Caco-2 (cell line): ENCODE measurements at regions of chr7 and their contacts with region 1.

Region 1: DNA sequence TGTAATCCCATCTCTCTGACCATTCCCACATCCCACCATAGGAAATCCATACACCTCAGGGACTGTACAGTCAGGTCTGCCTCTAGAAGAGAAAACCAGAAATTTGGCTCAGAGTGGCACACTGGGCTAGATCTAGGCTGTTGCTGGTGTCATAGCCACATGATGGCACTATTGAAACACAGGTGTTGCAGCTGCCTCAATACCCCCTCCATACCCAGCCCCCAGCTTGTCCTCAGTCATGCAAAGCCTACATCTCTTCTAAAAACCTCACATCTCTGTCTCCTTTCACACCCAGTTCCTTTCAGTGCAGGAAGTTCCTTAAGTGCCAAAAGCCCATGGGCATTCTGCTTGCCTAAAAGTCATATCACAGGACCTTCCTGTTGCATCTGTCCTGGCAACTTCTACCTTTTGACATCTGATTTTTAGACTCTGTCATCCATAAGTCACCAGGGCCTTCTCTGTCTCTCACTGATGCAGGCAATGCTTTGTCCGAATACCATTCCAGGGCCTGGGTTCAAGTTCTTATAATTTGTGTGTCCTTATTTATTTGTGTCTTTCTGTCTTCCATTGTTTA is 27.0 kb upstream of the HIBADH start:
- DNase-seq: peak; percentile 42 to 43
- H3K4me3 ChIP-seq: no peak overlapping the region
- H3K4me3 Mint-ChIP-seq: no peak overlapping the region
- H3K27ac Mint-ChIP-seq: no peak overlapping the region
- H3K4me1 ChIP-seq: no peaks in the 10 kb centered on the region
- H3K4me1 Mint-ChIP-seq: no peaks in the 10 kb centered on the region
- H3K27me3 ChIP-seq: no peaks in the 10 kb centered on the region; the same call in 1 of the 2 replicates
- H3K27me3 Mint-ChIP-seq: no peaks in the 10 kb centered on the region
- CTCF ChIP-seq: peak; percentile 19 to 60

Region 2: GRCh38 chr7:27587429-27587828 is 102.2 kb before region 1 on chr7:
- CTCF ChIA-PET with region 1: no interaction called
- POLR2A ChIA-PET with region 1: no interaction called
- intact Hi-C with region 1: no loop called
- DNase-seq: no peak
- H3K4me3 ChIP-seq: no peak overlapping the region
- H3K4me3 Mint-ChIP-seq: no peak overlapping the region
- H3K27ac Mint-ChIP-seq: no peak overlapping the region
- H3K4me1 ChIP-seq: no peaks in the 10 kb centered on the region
- H3K4me1 Mint-ChIP-seq: no peaks in the 10 kb centered on the region
- H3K27me3 ChIP-seq: no peaks in the 10 kb centered on the region
- H3K27me3 Mint-ChIP-seq: no peaks in the 10 kb centered on the region
- CTCF ChIP-seq: no peak

Region 3: DNA sequence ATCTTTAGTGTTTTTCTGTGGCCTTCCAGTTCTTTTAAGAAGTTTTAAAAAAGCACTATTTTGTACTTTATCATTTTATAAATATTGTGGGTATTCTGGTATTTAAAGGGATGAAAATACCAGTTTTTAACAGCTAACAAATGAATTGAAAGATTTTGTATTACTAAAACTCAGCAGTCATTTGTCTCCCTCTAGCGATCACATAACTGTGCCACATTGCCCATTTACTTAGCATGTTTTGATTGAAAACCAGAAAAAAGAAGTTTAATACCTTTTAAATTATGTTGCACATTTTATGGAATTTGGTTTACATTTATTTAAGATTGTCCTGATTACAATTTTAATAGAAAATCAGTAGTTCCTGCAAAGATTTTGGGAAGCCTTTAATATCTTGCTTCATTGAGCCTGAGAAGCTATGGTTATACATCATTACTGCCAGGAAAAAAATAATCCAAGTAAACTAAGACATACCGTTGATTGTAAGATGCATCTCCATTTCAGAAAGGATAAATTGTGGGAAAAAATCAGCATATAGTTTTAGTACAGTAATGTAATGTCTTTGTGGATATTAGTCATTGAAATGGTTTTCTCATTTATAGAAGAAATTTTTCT is 85.1 kb after region 1 on chr7:
- CTCF ChIA-PET with region 1: interaction called, 3 read pairs
- POLR2A ChIA-PET with region 1: no interaction called
- intact Hi-C with region 1: loop called (anchors 1 kb)
- DNase-seq: no peak
- H3K4me3 ChIP-seq: no peak overlapping the region
- H3K4me3 Mint-ChIP-seq: no peak overlapping the region
- H3K27ac Mint-ChIP-seq: no peak overlapping the region
- H3K4me1 ChIP-seq: no peaks in the 10 kb centered on the region
- H3K4me1 Mint-ChIP-seq: no peaks in the 10 kb centered on the region
- H3K27me3 ChIP-seq: no peaks in the 10 kb centered on the region; the same call in 1 of the 2 replicates
- H3K27me3 Mint-ChIP-seq: no peaks in the 10 kb centered on the region
- CTCF ChIP-seq: peak; percentile 71 to 75

Region 4: DNA sequence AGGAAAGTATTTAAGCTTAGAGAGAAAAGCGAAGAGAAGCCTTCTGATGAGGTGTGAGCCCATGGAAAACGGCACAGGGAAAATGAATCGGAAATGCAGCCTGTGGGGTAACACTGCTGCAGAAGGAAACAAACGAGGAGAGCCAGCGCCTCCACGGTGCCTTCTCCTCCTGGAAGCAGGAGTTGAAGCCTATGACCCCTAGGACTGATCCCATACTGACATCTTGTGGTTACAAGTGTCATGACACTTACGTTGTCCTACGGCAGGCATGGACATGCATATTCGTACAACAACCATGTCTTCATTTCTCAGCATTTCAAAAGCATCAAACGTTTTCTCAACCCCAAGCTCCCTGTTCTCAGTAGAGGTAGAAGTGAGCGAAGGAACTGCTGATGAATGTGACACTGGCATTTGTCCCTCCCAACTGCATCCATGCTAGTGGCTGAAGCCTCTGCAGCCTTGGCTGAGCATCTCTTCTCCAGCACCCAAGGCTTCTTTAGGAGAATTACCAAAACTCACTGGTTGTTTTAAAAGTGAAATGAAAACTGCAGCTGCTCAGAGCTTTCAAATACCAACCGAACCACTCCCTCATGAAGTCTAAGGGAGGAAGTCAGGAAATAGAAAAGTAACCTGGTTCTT is 330.7 kb after region 1 on chr7:
- CTCF ChIA-PET with region 1: no interaction called
- POLR2A ChIA-PET with region 1: no interaction called
- intact Hi-C with region 1: loop called (anchors 5 kb)
- DNase-seq: peak; percentile 76 to 77
- H3K4me3 ChIP-seq: no peak overlapping the region
- H3K4me3 Mint-ChIP-seq: peak overlapping the region; percentile 43
- H3K27ac Mint-ChIP-seq: no peak overlapping the region
- H3K4me1 ChIP-seq: peaks cover 3% of the 10 kb centered on the region; the same call in 1 of the 2 replicates
- H3K4me1 Mint-ChIP-seq: no peaks in the 10 kb centered on the region
- H3K27me3 ChIP-seq: no peaks in the 10 kb centered on the region; the same call in 1 of the 2 replicates
- H3K27me3 Mint-ChIP-seq: no peaks in the 10 kb centered on the region
- CTCF ChIP-seq: peak; percentile 87 to 88

Region 5: DNA sequence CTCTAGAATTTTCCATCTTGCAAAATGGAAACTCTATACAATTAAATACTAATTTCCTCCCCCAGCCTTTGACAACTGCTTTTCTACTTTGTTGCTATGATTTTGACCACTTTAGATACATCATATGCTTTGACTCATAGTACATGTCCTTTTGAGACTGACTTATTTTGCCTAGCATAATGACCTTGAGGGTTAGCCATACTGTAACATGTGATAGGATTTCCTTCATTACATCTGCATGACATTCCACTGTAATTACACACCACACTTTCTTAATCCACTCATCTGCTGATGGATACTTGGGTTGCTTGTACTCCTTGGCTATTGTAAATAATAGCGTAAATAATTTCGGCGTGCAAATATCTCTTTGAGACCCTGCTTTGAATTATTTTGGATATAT is 363.3 kb after region 1 on chr7:
- CTCF ChIA-PET with region 1: no interaction called
- POLR2A ChIA-PET with region 1: no interaction called
- intact Hi-C with region 1: no loop called
- DNase-seq: no peak
- H3K4me3 ChIP-seq: no peak overlapping the region
- H3K4me3 Mint-ChIP-seq: no peak overlapping the region
- H3K27ac Mint-ChIP-seq: no peak overlapping the region
- H3K4me1 ChIP-seq: peaks cover 7% of the 10 kb centered on the region; the same call in 1 of the 2 replicates
- H3K4me1 Mint-ChIP-seq: peaks cover 9% of the 10 kb centered on the region
- H3K27me3 ChIP-seq: no peaks in the 10 kb centered on the region
- H3K27me3 Mint-ChIP-seq: no peaks in the 10 kb centered on the region
- CTCF ChIP-seq: no peak